OCI-LY7 (cell line): ENCODE measurements at regions of chr7 and their contacts with region 1.

Region 1: GRCh38 chr7:36967387-36967786 is 243.1 kb upstream of the AOAH start:
- DNase-seq: peak; percentile 45
- H3K4me3 ChIP-seq: no peak overlapping the region
- H3K27ac ChIP-seq: no peak overlapping the region
- H3K4me1 ChIP-seq: no peaks in the 10 kb centered on the region
- CTCF ChIP-seq: peak; percentile 85

Region 2: GRCh38 chr7:36279200-36279925 is 688.0 kb before region 1 on chr7:
- CTCF ChIA-PET with region 1: no interaction called
- POLR2A ChIA-PET with region 1: no interaction called
- intact Hi-C with region 1: no loop called
- DNase-seq: no peak
- H3K4me3 ChIP-seq: no peak overlapping the region
- H3K27ac ChIP-seq: no peak overlapping the region
- H3K4me1 ChIP-seq: peaks cover 43% of the 10 kb centered on the region
- CTCF ChIP-seq: no peak

Region 3: GRCh38 chr7:36979810-36980248 is 12.4 kb after region 1 on chr7:
- CTCF ChIA-PET with region 1: no interaction called
- POLR2A ChIA-PET with region 1: interaction called, 15 read pairs
- intact Hi-C with region 1: no loop called
- DNase-seq: no peak
- H3K4me3 ChIP-seq: no peak overlapping the region
- H3K27ac ChIP-seq: no peak overlapping the region
- H3K4me1 ChIP-seq: peaks cover 4% of the 10 kb centered on the region
- CTCF ChIP-seq: no peak